ENCODE measurements at regions of chr1 and their contacts with region 1.

Region 1: DNA sequence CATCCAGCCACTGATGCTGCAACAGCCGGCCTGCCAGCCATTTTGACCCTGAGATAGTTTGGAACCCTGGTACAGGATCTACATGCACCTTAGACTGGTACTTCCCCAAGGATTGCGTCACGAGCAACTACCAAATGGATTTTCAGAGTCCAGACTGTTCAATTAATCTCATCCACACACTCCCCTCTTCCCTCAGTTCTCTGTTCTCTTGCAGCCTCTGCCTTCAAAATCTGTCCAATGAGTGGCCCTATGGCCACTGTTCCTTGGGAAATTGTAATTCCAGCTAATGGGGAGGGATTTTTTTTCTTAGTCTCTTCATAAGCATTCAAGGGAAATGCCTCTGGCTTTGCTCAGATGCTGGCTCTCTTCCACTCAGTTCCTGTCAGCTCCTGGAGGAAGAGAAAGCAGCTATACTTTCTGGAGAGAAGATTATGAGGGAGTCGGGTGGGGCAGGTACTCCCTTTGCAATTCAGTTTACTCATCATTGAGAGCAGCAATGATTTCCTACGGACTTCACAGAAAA is 19.8 kb upstream of the UAP1 start:
- DNase-seq: peak; percentile 98
- ATAC-seq: peak; percentile 83
- H3K4me3 ChIP-seq: no peak overlapping the region
- H3K27ac ChIP-seq: peak overlapping the region; percentile 86
- H3K4me1 ChIP-seq: peaks cover 9% of the 10 kb centered on the region
- H3K27me3 ChIP-seq: no peaks in the 10 kb centered on the region
- CTCF ChIP-seq: no peak
- POLR2A ChIP-seq: 0 out of 2 replicates have a peak, but pooled peaks have one; percentile 42
- RAD21 ChIP-seq: no peak

Region 2: GRCh38 chr1:162497723-162498500 is 43.8 kb before region 1 on chr1 and contains the start of gene UHMK1:
- CTCF ChIA-PET with region 1: no interaction called
- POLR2A ChIA-PET with region 1: interaction called, 10 read pairs
- dilution Hi-C with region 1: no loop called
- in situ Hi-C with region 1: no loop called
- intact Hi-C with region 1: no loop called
- DNase-seq: peak; percentile 87
- ATAC-seq: peak; percentile 95
- H3K4me3 ChIP-seq: peak within 1 kb of the TSS; percentile 98
- H3K27ac ChIP-seq: peak within 1 kb of the TSS; percentile 94
- H3K4me1 ChIP-seq: peaks cover 14% of the 10 kb centered on the region
- H3K27me3 ChIP-seq: peaks cover 3% of the 10 kb centered on the region; the same call in 1 of the 2 replicates
- CTCF ChIP-seq: no peak
- POLR2A ChIP-seq: peak; percentile 78
- RAD21 ChIP-seq: no peak
- total RNA-seq, gene UHMK1: 57.9 and 124 TPM in 2 replicates

Region 3: GRCh38 chr1:162561037-162561616 is 19.4 kb after region 1 on chr1:
- CTCF ChIA-PET with region 1: no interaction called
- POLR2A ChIA-PET with region 1: no interaction called
- dilution Hi-C with region 1: no loop called
- in situ Hi-C with region 1: no loop called
- intact Hi-C with region 1: loop called (anchors 1 kb)
- DNase-seq: peak; percentile 96
- ATAC-seq: peak; percentile 97
- H3K4me3 ChIP-seq: peak overlapping the region; percentile 94
- H3K27ac ChIP-seq: peak overlapping the region; percentile 79
- H3K4me1 ChIP-seq: peaks cover 10% of the 10 kb centered on the region
- H3K27me3 ChIP-seq: no peaks in the 10 kb centered on the region
- CTCF ChIP-seq: no peak
- POLR2A ChIP-seq: peak; percentile 90
- RAD21 ChIP-seq: peak; percentile 5; the same call in 1 of the 2 replicates

Region 4: GRCh38 chr1:162605225-162605927 is 63.7 kb after region 1 on chr1:
- CTCF ChIA-PET with region 1: no interaction called
- POLR2A ChIA-PET with region 1: no interaction called
- dilution Hi-C with region 1: no loop called
- in situ Hi-C with region 1: no loop called
- intact Hi-C with region 1: loop called (anchors 2 kb)
- DNase-seq: peak; percentile 98
- ATAC-seq: peak; percentile 81
- H3K4me3 ChIP-seq: no peak overlapping the region
- H3K27ac ChIP-seq: no peak overlapping the region
- H3K4me1 ChIP-seq: peaks cover 5% of the 10 kb centered on the region
- H3K27me3 ChIP-seq: no peaks in the 10 kb centered on the region
- CTCF ChIP-seq: no peak
- POLR2A ChIP-seq: no peak
- RAD21 ChIP-seq: no peak